Adrenal gland (tissue), 19 donors: ENCODE measurements at regions of chr1 and their contacts with region 1.

Region 1: GRCh38 chr1:112395821-112396652 is at the start of gene CTTNBP2NL:
- DNase-seq: peak; percentile 96 to 98 (median 97)
- H3K4me3 ChIP-seq: peak within 1 kb of the TSS; percentile 7 to 100 (median 76)
- H3K27ac ChIP-seq: peak within 1 kb of the TSS; percentile 35 to 91 (median 86)
- H3K4me1 ChIP-seq: peaks cover 19 to 49% of the 10 kb centered on the region in 2 donors
- H3K27me3 ChIP-seq: no peaks in the 10 kb centered on the region
- CTCF ChIP-seq: no peak
- POLR2A ChIP-seq: peak in 1 of 2 donors; percentile 59
- total RNA-seq, gene CTTNBP2NL: 5.5 to 22.0 (median 16.4) TPM

Region 2: GRCh38 chr1:112358798-112359408 is 37.1 kb before region 1 on chr1:
- intact Hi-C with region 1: no loop called
- DNase-seq: peak; percentile 38 to 89 (median 78)
- H3K4me3 ChIP-seq: no peak overlapping the region
- H3K27ac ChIP-seq: peak overlapping the region in 3 of 5 donors; percentile 76 to 95 (median 87)
- H3K4me1 ChIP-seq: peaks cover 0 to 9% of the 10 kb centered on the region in 2 donors
- H3K27me3 ChIP-seq: no peaks in the 10 kb centered on the region
- CTCF ChIP-seq: peak; percentile 61 to 82 (median 76)
- POLR2A ChIP-seq: no peak

Region 3: DNA sequence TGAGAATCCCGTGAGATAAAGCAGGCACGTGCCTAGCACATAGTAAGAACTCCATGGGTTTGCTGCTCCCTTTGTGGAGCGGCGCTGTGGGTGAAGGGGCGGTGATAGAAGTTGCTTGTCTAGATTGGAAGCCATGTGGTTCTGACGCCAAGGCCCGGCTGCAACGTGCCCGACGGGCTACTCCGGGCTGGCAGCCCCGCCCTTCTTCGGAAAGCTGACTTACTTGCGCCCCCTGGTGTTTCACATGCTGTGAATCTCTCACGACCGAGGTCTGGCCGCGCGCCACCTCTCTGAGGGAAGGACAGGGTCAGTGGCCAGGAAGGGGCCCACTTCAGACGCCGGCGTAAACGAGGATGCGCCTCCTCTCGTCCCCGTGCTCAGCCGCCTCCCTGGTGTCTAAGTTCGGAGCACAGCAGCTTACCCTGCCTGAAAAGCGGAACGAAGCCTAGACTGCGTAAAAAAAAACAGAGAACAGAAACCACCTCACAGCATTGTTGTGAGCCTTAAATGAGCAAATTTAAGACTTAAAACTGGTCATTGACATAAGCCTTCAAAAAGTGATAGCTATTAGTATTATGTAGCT is 70.1 kb after region 1 on chr1:
- intact Hi-C with region 1: loop called (anchors 2 to 5 kb)
- DNase-seq: peak; percentile 95 to 98 (median 97)
- H3K4me3 ChIP-seq: peak overlapping the region in 2 of 4 donors; percentile 4 to 44
- H3K27ac ChIP-seq: peak overlapping the region in 3 of 5 donors; percentile 25 to 66 (median 64)
- H3K4me1 ChIP-seq: peaks cover 0 to 13% of the 10 kb centered on the region in 2 donors
- H3K27me3 ChIP-seq: no peaks in the 10 kb centered on the region
- CTCF ChIP-seq: peak; percentile 83 to 97 (median 94)
- POLR2A ChIP-seq: no peak

Region 4: DNA sequence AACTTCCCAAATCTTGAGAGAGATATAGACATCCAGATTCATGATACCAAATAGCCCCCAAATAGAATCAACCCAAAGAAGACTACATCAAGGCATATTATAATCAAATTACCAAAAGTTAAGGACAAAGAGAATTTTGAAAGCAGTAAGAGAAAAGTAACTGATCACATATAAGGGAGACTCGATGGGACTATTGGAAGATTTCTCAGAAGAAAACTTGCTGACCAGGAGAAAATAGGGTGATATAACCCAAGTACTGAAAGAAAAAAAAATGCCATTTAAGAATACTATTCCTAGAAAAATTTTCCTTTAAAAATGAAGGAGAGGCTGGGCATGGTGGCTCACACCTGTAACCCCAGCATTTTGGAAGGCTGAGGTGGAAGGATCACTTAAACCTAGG is 82.3 kb after region 1 on chr1:
- intact Hi-C with region 1: no loop called
- DNase-seq: no peak
- H3K4me3 ChIP-seq: no peak overlapping the region
- H3K27ac ChIP-seq: no peak overlapping the region
- H3K4me1 ChIP-seq: no peaks in the 10 kb centered on the region
- H3K27me3 ChIP-seq: no peaks in the 10 kb centered on the region
- CTCF ChIP-seq: no peak
- POLR2A ChIP-seq: no peak

Region 5: GRCh38 chr1:112788561-112788960 is 392.5 kb after region 1 on chr1:
- intact Hi-C with region 1: no loop called
- DNase-seq: no peak
- H3K4me3 ChIP-seq: no peak overlapping the region
- H3K27ac ChIP-seq: no peak overlapping the region
- H3K4me1 ChIP-seq: no peaks in the 10 kb centered on the region
- H3K27me3 ChIP-seq: no peaks in the 10 kb centered on the region
- CTCF ChIP-seq: no peak
- POLR2A ChIP-seq: no peak